Calu3 (cell line): ENCODE measurements at regions of chrX and their contacts with region 1.

Region 1: DNA sequence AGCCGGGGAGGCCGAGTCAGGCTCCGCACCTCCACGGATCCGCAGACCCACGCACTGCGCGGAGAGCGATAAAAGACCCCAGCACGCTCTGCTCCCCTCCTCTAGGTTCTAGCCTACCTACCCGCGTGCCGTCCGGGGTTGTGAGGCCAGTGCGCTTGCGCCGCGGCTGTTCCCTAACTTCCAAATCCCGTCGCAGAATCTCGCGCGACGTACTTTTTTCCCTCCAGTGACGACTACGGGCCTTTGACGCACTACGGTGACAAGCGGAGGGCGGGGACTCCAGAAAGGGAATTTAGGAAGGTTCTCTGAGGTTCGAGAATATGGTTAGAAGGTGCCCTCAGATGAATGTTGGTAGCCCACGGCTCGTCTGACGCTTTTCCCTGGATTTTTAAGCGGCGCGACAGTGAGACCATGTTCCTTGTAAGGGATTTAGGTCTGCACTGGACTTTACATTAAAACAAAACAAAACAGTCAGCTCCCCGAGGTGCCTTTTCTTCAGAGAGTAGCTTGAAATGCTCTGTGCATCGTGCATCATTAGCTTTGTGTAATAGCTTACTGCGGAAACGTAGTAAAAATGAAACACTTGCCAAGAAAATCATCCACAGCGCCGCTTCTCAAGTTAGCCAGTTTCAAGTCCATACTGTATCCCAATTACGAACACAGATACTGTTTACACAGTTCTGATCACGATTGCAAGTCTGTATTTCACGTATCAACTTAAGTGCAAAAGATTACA is at the start of gene NKRF:
- DNase-seq: peak; percentile 89
- H3K4me3 Mint-ChIP-seq: peak within 1 kb of the TSS; percentile 90
- H3K27ac Mint-ChIP-seq: peak within 1 kb of the TSS; percentile 90
- H3K4me1 Mint-ChIP-seq: peaks cover 16% of the 10 kb centered on the region
- H3K27me3 Mint-ChIP-seq: no peaks in the 10 kb centered on the region
- CTCF ChIP-seq: no peak
- total RNA-seq, gene NKRF: 17.8 and 18.0 TPM in 2 replicates

Region 2: DNA sequence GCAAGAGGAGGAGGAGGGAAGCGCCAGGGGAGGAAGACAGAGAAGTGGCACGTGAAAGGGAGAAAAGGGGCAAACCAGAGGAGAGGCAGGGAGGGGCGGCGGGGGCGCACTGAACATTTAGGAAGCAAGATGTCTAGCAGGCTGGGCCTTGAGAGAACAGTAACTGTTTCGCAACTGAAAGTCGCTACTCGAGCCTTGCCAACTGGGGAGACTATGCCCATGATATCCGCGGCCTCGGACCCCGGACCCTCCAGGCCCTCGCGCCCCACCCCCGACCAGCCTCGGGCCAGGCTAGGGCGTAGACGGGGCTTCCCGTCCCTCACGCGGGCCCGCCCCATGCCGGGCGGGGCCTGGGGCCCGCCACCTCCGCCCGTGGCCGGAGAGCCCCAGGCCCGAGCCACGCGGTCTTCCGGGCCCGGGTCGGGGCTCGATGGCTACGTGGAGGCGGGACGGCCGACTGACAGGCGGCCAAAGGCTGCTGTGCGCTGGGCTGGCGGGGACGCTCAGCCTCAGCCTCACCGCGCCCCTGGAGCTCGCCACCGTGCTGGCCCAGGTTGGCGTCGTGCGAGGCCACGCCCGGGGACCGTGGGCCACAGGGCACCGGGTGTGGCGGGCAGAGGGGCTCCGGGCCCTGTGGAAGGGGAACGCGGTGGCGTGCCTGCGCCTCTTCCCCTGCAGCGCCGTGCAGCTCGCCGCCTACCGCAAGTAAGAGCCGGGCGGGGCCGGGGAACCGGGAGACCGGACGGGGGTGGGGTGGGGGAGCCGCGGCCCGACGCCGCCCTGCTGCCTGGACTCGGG is 207.3 kb before region 1 on chrX and contains the start of gene SLC25A43:
- CTCF ChIA-PET with region 1: no interaction called
- intact Hi-C with region 1: no loop called
- DNase-seq: peak; percentile 33
- H3K4me3 Mint-ChIP-seq: peak within 1 kb of the TSS; percentile 78
- H3K27ac Mint-ChIP-seq: peak within 1 kb of the TSS; percentile 89
- H3K4me1 Mint-ChIP-seq: peaks cover 12% of the 10 kb centered on the region
- H3K27me3 Mint-ChIP-seq: no peaks in the 10 kb centered on the region
- CTCF ChIP-seq: no peak
- total RNA-seq, gene SLC25A43: 14.3 and 15.5 TPM in 2 replicates

Region 3: DNA sequence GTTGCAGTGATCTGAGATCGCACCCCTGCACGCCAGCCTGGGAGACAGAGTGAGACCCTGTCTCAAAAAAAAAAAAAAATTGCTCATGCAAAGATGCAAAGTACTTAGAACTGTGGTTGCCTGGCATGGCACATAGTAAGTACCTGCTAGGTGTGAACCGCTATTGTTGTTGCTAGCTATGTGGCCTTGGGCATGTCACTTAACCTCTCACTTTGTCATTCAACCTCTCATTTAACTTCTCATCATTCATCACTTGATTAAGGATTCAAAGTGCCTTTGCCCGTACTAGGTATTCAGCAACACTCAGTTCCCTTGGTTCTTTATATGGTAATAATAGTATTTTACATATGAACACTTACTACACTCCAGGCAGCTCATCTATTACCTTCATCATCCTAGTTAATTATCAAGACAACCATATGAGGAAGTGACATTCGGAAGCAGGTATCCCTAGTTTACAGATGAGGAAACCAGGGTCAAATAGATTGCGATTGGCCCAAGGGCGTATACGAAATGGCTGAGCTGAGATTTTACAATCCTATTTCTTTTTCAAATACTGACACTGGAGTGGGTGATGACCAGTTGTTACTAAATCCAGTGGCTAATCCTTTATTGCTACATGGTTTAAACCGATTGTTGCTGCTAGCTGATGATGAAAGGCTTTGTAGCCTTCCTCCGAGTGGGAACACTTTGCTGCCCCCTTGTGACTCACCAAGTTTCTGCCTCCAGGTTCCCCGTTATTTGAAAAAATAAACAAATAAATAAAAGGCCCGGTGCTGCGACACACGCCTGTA is 123.2 kb after region 1 on chrX:
- CTCF ChIA-PET with region 1: interaction called, 24 read pairs
- intact Hi-C with region 1: loop called (anchors 1 kb)
- DNase-seq: peak; percentile 68
- H3K4me3 Mint-ChIP-seq: no peak overlapping the region
- H3K27ac Mint-ChIP-seq: no peak overlapping the region
- H3K4me1 Mint-ChIP-seq: no peaks in the 10 kb centered on the region
- H3K27me3 Mint-ChIP-seq: peaks cover 24% of the 10 kb centered on the region
- CTCF ChIP-seq: peak; percentile 46

Region 4: GRCh38 chrX:119817130-119817690 is 210.8 kb after region 1 on chrX:
- CTCF ChIA-PET with region 1: no interaction called
- intact Hi-C with region 1: no loop called
- DNase-seq: no peak
- H3K4me3 Mint-ChIP-seq: no peak overlapping the region
- H3K27ac Mint-ChIP-seq: no peak overlapping the region
- H3K4me1 Mint-ChIP-seq: no peaks in the 10 kb centered on the region
- H3K27me3 Mint-ChIP-seq: no peaks in the 10 kb centered on the region
- CTCF ChIP-seq: no peak